ENCODE measurements at regions of chr9 and their contacts with region 1.

Region 1: DNA sequence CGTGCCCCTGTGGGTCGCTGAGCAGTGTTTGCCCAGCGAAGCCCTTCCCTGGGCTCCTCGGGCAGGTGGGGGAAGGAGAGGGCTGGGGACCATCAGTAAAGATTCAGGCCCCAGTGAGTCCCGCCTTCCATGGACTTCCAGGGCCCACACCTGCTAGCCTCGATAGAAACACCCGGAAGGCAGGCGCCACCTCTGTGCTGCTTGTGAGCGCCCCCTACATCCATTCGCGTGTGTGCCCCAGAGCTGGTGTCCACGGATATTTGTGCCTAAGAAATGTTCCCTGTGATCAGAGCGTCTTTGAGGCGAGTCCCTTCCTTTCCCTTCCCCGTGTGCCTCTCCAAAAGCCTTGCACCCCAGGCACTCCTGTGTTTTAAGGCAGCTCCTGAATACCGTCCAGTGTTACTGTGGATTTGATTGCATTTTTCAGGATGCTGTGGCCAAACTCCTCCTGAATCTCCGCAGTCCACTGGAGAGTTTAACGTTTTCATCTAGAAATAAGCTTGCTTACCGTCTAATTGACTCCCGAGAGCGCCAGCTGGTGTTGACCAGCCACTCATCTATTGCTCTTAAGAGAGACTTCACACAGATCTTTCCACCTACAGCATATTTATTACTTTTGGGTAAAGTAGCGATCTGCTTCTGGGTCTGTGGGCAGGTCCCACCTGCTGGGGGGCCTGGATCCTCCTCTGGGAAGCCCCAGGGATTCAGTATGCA is 101.4 kb downstream of the COL5A1 start:
- DNase-seq: no peak
- ATAC-seq: no peak
- H3K4me3 ChIP-seq: no peak overlapping the region
- H3K27ac ChIP-seq: no peak overlapping the region
- H3K4me1 ChIP-seq: no peaks in the 10 kb centered on the region
- H3K27me3 ChIP-seq: peaks cover 0 to 22% of the 10 kb centered on the region in 2 donors
- CTCF ChIP-seq: no peak

Region 2: GRCh38 chr9:134698587-134699342 is 44.2 kb before region 1 on chr9:
- intact Hi-C with region 1: loop called in 1 of 2 experiments (anchors 5 kb)
- DNase-seq: peak in 3 of 4 donors; percentile 62 to 87 (median 68)
- ATAC-seq: peak; percentile 78
- H3K4me3 ChIP-seq: no peak overlapping the region
- H3K27ac ChIP-seq: no peak overlapping the region
- H3K4me1 ChIP-seq: peaks cover 0 to 4% of the 10 kb centered on the region in 2 donors
- H3K27me3 ChIP-seq: no peaks in the 10 kb centered on the region
- CTCF ChIP-seq: peak; percentile 84